ENCODE measurements at regions of chr10 and their contacts with region 1.

Region 1: DNA sequence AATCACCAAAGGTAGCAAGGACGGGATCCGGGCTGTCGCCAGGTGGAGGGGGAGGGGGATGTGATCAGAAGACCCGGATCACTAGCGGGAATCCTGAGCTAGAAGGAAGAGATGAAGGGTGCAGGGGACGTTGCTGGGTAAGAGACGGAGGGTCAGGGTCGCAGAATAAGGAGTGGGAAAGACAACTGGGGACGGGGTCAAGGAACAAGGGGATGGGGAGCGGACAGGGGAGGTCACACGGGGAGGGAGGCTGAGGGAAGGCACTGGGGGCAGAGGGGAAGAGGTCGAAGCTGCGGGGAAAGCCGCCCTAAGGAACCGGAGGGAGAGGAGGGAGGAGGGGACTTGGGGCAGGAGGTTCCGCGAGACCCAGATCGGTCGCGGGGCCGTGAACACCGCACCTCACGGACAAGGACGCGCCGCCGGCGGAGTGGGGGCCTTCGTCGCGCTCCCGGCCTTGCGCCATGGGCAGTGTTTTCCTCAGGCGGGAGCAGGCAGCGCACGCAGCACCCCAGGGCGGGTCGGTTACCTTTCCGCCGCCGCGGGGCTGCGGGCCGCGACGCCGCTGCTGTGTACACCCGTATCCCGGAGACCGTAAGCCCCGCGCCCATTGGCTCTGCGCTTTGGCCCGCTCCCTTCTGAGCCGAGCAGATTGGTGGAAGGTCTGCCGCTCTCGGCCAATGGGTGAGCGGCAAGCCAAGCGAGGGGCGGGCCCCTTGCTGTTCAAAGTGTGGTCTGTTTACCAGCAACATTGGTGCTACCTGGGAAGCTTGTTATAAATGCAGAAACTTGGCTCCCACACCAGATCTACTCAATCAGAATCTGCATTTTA is at the start of gene CFAP43:
- DNase-seq: peak; percentile 97 to 98
- ATAC-seq: peak; percentile 100
- H3K4me3 ChIP-seq: peak within 1 kb of the TSS; percentile 72 to 86 (median 80)
- H3K27ac ChIP-seq: peak within 1 kb of the TSS in 1 of 4 donors; percentile 24
- H3K4me1 ChIP-seq: peaks cover 8 to 9% of the 10 kb centered on the region in 2 donors
- H3K27me3 ChIP-seq: no peaks in the 10 kb centered on the region
- CTCF ChIP-seq: no peak
- POLR2A ChIP-seq: no peak
- total RNA-seq, gene CFAP43: not detected

Region 2: DNA sequence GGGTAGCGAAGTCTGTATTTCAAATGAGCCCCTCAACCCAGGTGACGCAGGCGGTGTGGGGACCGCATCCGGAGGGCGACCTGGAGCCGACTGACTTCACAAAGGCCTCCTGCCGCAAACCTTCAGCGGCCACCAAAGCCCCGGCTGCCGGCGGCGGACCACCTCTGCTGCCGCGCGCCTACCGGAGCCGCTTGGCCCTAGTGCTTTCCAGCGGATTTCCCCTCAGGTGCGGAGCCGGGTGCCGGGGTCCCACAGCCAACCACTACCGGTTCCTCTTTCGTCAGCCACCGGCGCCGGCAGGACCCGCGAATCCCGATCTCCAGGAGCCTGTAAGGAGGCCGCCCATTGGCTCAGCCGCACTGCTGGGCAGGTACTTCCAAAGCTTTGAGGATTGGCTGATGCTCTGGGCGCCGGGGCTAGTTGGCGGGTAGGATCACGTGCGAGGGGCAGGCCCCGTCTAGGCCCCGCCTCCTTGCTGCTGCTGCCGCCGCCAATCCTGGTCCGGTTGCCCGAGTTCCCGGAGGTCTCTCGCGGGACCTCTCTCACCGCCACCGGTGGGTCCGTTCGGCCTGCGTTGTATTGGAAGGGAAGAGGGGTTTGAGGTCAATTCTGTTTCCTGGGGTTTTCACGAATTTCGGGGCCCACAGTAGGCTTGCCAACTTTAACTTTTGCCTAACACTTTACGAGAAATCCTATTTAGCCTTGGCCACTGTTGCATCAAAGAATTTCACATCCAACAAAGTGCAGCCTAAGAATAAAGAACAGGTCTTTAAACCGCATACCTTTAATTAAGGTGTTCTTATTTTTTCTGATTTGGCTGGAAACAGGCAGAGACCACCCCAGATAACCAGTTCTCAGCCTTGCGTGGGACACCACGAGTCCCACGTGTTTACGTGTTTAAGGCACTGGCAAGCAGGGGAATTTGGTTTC is 37.0 kb after region 1 on chr10 and contains the start of gene GSTO2:
- in situ Hi-C with region 1: no loop called
- intact Hi-C with region 1: loop called (anchors 1 kb)
- DNase-seq: peak; percentile 99 to 100
- ATAC-seq: peak; percentile 99
- H3K4me3 ChIP-seq: peak within 1 kb of the TSS; percentile 76 to 100 (median 86)
- H3K27ac ChIP-seq: peak within 1 kb of the TSS; percentile 87 to 93 (median 89)
- H3K4me1 ChIP-seq: peaks cover 8 to 11% of the 10 kb centered on the region in 2 donors
- H3K27me3 ChIP-seq: no peaks in the 10 kb centered on the region
- CTCF ChIP-seq: no peak
- POLR2A ChIP-seq: peak; percentile 63 to 81
- total RNA-seq, gene GSTO2: 0.71 to 2.3 (median 1.4) TPM in 3 of 4 donors, not detected in the other